Activated T-helper 1 cell treated with anti-CD3 and anti-CD28 coated beads, Interleukin-12 subunit alpha, Interleukin-12 subunit beta, Interleukin-2, Interleukin-4 antibody, amounts not matched to agents 30 ng/mL and 10 ng/mL and 1 ng/mL, durations not matched to agents 14 hours and 24 hours and 36 hours (primary cell): ENCODE measurements at regions of chr5 and their contacts with region 1.

Region 1: GRCh38 chr5:178058321-178059012 is 54.9 kb upstream of the N4BP3 start:
- DNase-seq: no peak
- H3K4me3 Mint-ChIP-seq: no peak overlapping the region
- H3K27ac Mint-ChIP-seq: no peak overlapping the region
- H3K4me1 Mint-ChIP-seq: peaks cover 5% of the 10 kb centered on the region
- H3K27me3 Mint-ChIP-seq: peaks cover 4% of the 10 kb centered on the region

Region 2: DNA sequence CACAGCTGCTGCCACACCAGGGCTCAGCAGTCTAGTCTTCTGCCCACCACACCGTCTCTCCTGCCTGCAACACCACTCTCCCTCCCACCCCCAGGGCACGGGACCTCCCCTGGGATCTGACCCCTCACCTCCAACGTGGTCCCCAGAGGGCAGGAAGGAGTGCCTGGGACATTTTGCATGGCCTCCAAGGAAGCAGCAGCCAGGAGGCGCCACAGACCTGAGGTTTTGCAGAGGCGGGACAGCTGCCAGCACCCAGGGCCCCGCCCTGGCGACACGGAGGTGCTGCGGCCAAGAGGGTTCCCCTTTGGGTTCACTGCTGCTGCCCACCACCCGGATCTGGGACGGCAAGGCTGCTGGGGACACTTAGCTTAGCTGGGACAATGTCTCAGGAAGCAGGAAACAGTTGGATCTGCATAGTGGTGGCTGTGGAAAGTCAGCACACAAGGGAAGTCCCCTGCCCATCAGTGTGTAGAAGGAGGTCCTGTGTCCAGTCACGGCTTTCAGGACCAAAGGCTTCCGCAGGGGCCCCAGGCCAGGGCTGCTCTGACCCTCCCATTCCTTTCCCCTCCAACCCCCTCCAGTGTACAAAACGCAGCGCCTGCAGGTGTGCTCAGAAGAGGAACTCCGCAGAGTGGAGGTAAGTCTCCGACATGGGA is 76.3 kb before region 1 on chr5:
- intact Hi-C with region 1: loop called (anchors 2 kb)
- DNase-seq: no peak
- H3K4me3 Mint-ChIP-seq: no peak overlapping the region
- H3K27ac Mint-ChIP-seq: no peak overlapping the region
- H3K4me1 Mint-ChIP-seq: no peaks in the 10 kb centered on the region
- H3K27me3 Mint-ChIP-seq: peaks cover 39% of the 10 kb centered on the region

Region 3: GRCh38 chr5:179852993-179853547 is 1794.6 kb after region 1 on chr5:
- intact Hi-C with region 1: loop called (anchors 5 kb)
- DNase-seq: no peak
- H3K4me3 Mint-ChIP-seq: no peak overlapping the region
- H3K27ac Mint-ChIP-seq: no peak overlapping the region
- H3K4me1 Mint-ChIP-seq: peaks cover 7% of the 10 kb centered on the region
- H3K27me3 Mint-ChIP-seq: no peaks in the 10 kb centered on the region